PC-9 (cell line): ENCODE measurements at regions of chr6 and their contacts with region 1.

Region 1: DNA sequence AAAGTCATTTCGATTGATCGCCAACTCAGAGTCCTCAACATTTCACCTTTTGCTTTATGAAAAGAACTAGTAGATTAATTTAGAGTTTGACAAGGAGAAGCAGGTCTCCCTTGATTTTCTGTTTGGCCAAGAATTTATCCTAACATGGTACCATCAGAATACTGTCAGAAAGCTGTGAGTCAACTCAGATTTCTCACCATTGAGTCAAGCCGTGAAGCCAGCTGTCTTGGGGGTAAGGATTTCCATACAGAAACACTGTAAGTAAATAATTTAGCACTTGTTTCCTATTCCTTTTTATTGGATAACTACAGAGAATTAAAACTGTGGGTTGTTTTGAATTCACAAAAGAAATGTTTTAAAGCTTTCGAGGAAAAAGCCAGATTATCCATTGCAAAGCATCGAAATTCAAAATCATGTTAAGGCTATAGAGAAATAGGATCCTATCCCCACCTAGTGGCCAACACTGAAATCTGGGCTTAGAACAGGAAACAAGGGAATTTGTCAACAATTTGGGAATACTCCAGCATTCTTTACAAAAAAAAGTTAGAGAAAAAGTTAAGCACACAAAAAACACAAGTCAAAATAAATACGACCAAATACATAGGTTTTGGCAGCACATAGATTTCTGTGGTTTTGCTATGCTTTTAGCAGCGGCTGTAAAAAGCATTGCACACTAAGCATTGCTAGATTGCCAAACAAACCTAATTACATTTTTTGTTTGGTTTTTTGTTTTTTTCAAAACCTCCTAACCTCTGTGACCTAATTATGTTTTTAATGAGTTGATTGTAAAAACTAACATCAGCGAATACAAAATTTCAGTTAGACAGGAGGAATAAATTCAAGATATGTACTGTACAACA is 44.2 kb downstream of the COL11A2 start:
- DNase-seq: no peak
- H3K4me3 ChIP-seq: no peak overlapping the region
- H3K27ac ChIP-seq: no peak overlapping the region
- H3K4me1 ChIP-seq: no peaks in the 10 kb centered on the region
- H3K27me3 ChIP-seq: peaks cover 57% of the 10 kb centered on the region
- CTCF ChIP-seq: peak; percentile 82

Region 2: GRCh38 chr6:33014841-33015634 is 133.0 kb before region 1 on chr6:
- CTCF ChIA-PET with region 1: no interaction called
- POLR2A ChIA-PET with region 1: no interaction called
- intact Hi-C with region 1: loop called (anchors 10 kb)
- DNase-seq: peak; percentile 45 to 52
- H3K4me3 ChIP-seq: no peak overlapping the region
- H3K27ac ChIP-seq: no peak overlapping the region
- H3K4me1 ChIP-seq: no peaks in the 10 kb centered on the region
- H3K27me3 ChIP-seq: peaks cover 93% of the 10 kb centered on the region
- CTCF ChIP-seq: peak; percentile 85